IMR-90 (cell line): ENCODE measurements at regions of chr10 and their contacts with region 1.

Region 1: GRCh38 chr10:122648599-122649428 is 50.8 kb downstream of the C10orf120 start:
- DNase-seq: peak; percentile 31
- ATAC-seq: peak; percentile 86
- H3K4me3 ChIP-seq: no peak overlapping the region
- H3K27ac ChIP-seq: no peak overlapping the region
- H3K4me1 ChIP-seq: no peaks in the 10 kb centered on the region
- H3K27me3 ChIP-seq: no peaks in the 10 kb centered on the region
- CTCF ChIP-seq: peak; percentile 69
- POLR2A ChIP-seq: no peak
- RAD21 ChIP-seq: peak; percentile 68

Region 2: DNA sequence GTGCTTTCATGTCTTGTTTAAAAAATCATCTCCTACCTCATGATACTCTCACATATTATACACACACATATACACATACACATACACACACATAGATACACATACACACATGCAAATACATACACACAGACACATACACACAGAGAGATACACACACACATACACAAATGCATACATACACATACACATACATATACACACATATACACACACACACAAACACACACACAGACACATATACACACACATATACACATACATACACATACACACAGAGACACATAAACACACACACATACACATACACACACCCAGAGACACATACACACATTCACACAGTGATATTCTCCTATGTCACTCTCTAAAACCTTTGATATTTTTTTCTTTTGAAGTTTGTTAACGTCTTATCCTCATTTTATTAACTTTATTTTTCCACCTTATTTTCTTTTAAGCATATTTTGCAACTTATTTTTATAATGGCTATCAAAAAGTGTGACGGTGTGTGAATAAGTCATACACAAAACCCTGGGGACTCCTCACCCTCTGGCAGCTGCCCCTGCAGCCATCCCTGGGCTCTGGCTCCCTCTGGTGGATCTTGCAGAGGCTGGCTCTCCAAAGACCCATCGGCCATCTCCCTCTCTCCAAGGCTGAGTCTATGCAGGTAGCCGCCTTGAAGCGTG is 54.8 kb after region 1 on chr10:
- CTCF ChIA-PET with region 1: no interaction called
- POLR2A ChIA-PET with region 1: no interaction called
- dilution Hi-C with region 1: no loop called
- in situ Hi-C with region 1: no loop called
- intact Hi-C with region 1: loop called (anchors 2 kb)
- DNase-seq: peak; percentile 35
- ATAC-seq: peak; percentile 94
- H3K4me3 ChIP-seq: no peak overlapping the region
- H3K27ac ChIP-seq: no peak overlapping the region
- H3K4me1 ChIP-seq: no peaks in the 10 kb centered on the region
- H3K27me3 ChIP-seq: no peaks in the 10 kb centered on the region
- CTCF ChIP-seq: peak; percentile 70
- POLR2A ChIP-seq: no peak
- RAD21 ChIP-seq: peak; percentile 79

Region 3: GRCh38 chr10:122980209-122981065 is 331.6 kb after region 1 on chr10 and contains the start of gene PSTK:
- CTCF ChIA-PET with region 1: no interaction called
- POLR2A ChIA-PET with region 1: no interaction called
- dilution Hi-C with region 1: no loop called
- in situ Hi-C with region 1: no loop called
- intact Hi-C with region 1: loop called (anchors 10 kb)
- DNase-seq: peak; percentile 92
- ATAC-seq: peak; percentile 98
- H3K4me3 ChIP-seq: peak within 1 kb of the TSS; percentile 83
- H3K27ac ChIP-seq: peak within 1 kb of the TSS; percentile 90
- H3K4me1 ChIP-seq: no peaks in the 10 kb centered on the region
- H3K27me3 ChIP-seq: no peaks in the 10 kb centered on the region
- CTCF ChIP-seq: peak; percentile 90
- POLR2A ChIP-seq: peak; percentile 31; the same call in 1 of the 2 replicates
- RAD21 ChIP-seq: peak; percentile 37
- total RNA-seq, gene PSTK: 4.1 and 4.7 TPM in 2 replicates